ENCODE measurements at regions of chr18 and their contacts with region 1.

Region 1: DNA sequence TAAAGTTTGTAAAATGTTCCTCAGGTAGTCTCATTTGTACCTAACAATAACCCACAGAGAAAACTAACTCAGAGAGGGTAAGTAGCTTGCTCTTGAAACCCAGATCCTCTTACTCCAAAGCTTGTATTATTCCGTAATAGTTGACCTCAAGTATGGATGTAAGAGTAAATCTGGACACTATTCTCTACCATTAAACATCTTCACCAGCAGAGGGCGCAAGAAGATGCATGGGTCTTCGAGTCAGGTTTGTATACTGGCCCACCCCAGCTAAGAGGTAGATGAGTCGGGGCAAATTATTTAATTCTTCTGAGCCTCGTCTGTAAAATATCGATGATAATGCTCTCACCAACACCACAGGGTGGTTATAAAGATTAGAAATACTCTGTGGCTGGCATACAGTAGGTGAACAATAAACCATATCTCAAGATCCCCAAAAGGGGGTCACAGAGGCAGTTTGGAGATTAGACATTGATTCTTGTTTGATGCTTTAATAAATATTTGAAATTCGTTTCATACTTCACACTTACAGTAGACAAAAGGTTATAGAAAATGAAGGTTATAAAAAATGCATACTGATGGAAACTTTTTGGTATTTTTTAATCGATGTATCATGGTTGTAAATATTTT is 3.5 kb upstream of the CABLES1 start:
- DNase-seq: no peak
- ATAC-seq: no peak
- H3K4me3 ChIP-seq: no peak overlapping the region
- H3K27ac ChIP-seq: peak overlapping the region; percentile 97
- H3K4me1 ChIP-seq: peaks cover 40% of the 10 kb centered on the region
- H3K27me3 ChIP-seq: no peaks in the 10 kb centered on the region
- CTCF ChIP-seq: peak; percentile 90

Region 2: DNA sequence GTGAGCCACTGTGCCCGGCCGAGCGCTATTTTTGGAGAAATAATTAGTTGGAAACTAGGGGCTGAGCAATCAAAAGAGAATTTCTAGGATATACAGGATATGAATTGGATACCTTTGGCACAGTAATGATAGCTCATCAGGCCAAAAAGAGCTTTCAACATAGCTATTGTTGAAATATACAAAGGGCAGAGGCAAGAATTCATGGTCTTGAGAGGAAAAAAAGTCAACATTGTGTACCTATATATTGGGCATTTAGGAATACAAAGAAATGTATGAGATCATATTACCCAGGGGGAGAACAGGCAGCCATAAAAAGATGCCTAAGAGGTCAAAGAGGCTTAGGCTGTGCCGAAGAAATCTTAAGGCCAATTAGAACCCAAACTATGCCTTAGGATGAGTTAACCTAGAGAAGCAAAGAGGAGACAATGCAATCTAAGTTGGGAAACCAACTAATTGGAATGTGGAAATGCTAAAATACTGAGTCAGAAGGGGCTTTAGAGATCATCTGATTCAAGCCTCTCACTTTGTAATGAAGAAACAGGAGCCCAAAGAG is 99.7 kb before region 1 on chr18:
- CTCF ChIA-PET with region 1: interaction called, 4 read pairs
- POLR2A ChIA-PET with region 1: interaction called, 3 read pairs
- in situ Hi-C with region 1: no loop called
- intact Hi-C with region 1: loop called (anchors 5 kb)
- DNase-seq: no peak
- ATAC-seq: peak; percentile 49
- H3K4me3 ChIP-seq: no peak overlapping the region
- H3K27ac ChIP-seq: peak overlapping the region; percentile 36
- H3K4me1 ChIP-seq: peaks cover 14% of the 10 kb centered on the region
- H3K27me3 ChIP-seq: no peaks in the 10 kb centered on the region
- CTCF ChIP-seq: no peak

Region 3: GRCh38 chr18:23220355-23220754 is 88.5 kb after region 1 on chr18:
- CTCF ChIA-PET with region 1: no interaction called
- POLR2A ChIA-PET with region 1: no interaction called
- in situ Hi-C with region 1: no loop called
- intact Hi-C with region 1: no loop called
- DNase-seq: no peak
- ATAC-seq: peak; percentile 35; the same call in 1 of the 2 replicates
- H3K4me3 ChIP-seq: no peak overlapping the region
- H3K27ac ChIP-seq: no peak overlapping the region
- H3K4me1 ChIP-seq: no peaks in the 10 kb centered on the region
- H3K27me3 ChIP-seq: no peaks in the 10 kb centered on the region
- CTCF ChIP-seq: no peak

Region 4: DNA sequence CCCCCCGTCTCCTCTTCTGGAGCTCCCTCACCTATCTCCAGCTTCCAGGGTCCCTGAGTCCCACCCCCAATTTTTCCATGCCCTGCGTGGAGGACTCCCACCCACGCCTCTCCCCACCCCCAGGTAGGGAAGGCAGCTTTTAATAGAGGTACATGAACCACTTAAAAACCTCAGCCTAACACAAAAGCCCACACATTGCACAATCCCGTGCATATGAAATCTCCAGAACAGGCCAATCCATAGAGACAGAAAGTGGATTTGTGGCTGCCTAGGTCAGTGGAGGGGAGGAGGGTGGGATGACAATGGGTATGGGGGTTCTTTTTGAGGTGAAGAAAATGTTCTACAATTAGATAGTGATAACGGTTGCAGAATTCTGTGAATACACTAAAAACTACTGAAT is 149.0 kb after region 1 on chr18:
- CTCF ChIA-PET with region 1: interaction called, 11 read pairs
- POLR2A ChIA-PET with region 1: no interaction called
- in situ Hi-C with region 1: no loop called
- intact Hi-C with region 1: no loop called
- DNase-seq: no peak
- ATAC-seq: no peak
- H3K4me3 ChIP-seq: no peak overlapping the region
- H3K27ac ChIP-seq: peak overlapping the region; percentile 81
- H3K4me1 ChIP-seq: peaks cover 44% of the 10 kb centered on the region
- H3K27me3 ChIP-seq: no peaks in the 10 kb centered on the region
- CTCF ChIP-seq: no peak

Region 5: GRCh38 chr18:23406271-23406787 is 274.5 kb after region 1 on chr18:
- CTCF ChIA-PET with region 1: interaction called, 6 read pairs
- POLR2A ChIA-PET with region 1: no interaction called
- in situ Hi-C with region 1: no loop called
- intact Hi-C with region 1: loop called (anchors 2 kb)
- DNase-seq: no peak
- ATAC-seq: 0 out of 2 replicates have a peak, but pooled peaks have one; percentile 47
- H3K4me3 ChIP-seq: no peak overlapping the region
- H3K27ac ChIP-seq: peak overlapping the region; percentile 58; the same call in 1 of the 2 replicates
- H3K4me1 ChIP-seq: peaks cover 19% of the 10 kb centered on the region
- H3K27me3 ChIP-seq: no peaks in the 10 kb centered on the region
- CTCF ChIP-seq: no peak